Right lobe of liver (tissue), 6 donors: ENCODE measurements at regions of chr1 and their contacts with region 1.

Region 1: GRCh38 chr1:94329986-94330385 is 88.2 kb upstream of the ABCD3 start:
- DNase-seq: no peak
- ATAC-seq: peak; percentile 83 to 88 (median 86)
- H3K4me3 ChIP-seq: no peak overlapping the region
- H3K27ac ChIP-seq: no peak overlapping the region
- H3K4me1 ChIP-seq: peaks cover 0 to 4% (median 0%) of the 10 kb centered on the region in 4 donors
- H3K27me3 ChIP-seq: no peaks in the 10 kb centered on the region
- CTCF ChIP-seq: peak; percentile 49 to 59 (median 54)
- POLR2A ChIP-seq: no peak

Region 2: DNA sequence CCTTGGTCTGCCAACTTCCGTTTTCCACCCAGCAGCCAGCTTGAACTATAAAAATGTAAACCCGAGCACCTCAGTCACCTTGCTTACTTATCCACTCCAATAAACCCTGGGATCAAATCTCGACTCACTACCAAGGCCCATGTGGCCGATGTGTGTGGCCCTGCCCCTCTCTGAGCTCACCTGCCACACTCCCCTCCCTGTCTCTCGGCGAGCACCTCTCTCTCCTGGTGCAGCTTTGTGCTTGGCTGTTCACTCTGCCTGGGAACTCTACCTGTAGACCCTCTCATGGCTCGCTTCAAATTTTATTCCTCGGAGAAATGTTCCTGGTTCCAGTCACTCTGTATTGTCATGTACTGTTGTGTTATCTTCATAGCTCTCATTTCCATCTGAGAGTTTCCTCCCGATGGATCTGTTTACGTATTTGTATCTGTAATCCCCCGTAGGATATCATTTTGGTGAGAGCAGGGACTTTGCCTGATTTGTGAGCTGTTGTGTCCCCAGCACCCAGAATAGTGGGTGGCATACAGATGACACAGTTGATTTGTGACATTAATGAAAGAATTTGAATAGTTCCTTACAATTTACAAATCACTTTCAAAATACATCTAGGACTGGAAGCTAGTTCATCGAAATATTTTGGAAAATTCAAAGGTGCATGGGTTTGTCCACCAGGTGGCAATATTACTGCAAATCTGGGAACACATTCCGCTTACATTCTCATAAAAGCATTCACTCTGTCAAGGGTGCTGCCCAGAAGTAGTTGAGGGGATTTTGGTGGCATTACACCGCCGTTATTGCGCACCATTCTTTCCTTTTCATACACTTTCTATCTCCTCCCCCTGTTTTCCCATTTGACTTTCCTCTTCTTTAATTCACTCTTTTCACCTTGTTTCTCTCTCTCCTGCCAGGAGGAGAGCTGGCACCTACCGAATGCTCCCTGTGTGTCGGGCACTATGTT is 304.3 kb before region 1 on chr1:
- intact Hi-C with region 1: no loop called
- DNase-seq: no peak
- ATAC-seq: peak; percentile 74 to 79 (median 78)
- H3K4me3 ChIP-seq: peak overlapping the region; percentile 5 to 23 (median 13)
- H3K27ac ChIP-seq: no peak overlapping the region
- H3K4me1 ChIP-seq: peaks cover 0 to 5% (median 0%) of the 10 kb centered on the region in 4 donors
- H3K27me3 ChIP-seq: no peaks in the 10 kb centered on the region
- CTCF ChIP-seq: peak; percentile 79 to 85 (median 84)
- POLR2A ChIP-seq: no peak

Region 3: DNA sequence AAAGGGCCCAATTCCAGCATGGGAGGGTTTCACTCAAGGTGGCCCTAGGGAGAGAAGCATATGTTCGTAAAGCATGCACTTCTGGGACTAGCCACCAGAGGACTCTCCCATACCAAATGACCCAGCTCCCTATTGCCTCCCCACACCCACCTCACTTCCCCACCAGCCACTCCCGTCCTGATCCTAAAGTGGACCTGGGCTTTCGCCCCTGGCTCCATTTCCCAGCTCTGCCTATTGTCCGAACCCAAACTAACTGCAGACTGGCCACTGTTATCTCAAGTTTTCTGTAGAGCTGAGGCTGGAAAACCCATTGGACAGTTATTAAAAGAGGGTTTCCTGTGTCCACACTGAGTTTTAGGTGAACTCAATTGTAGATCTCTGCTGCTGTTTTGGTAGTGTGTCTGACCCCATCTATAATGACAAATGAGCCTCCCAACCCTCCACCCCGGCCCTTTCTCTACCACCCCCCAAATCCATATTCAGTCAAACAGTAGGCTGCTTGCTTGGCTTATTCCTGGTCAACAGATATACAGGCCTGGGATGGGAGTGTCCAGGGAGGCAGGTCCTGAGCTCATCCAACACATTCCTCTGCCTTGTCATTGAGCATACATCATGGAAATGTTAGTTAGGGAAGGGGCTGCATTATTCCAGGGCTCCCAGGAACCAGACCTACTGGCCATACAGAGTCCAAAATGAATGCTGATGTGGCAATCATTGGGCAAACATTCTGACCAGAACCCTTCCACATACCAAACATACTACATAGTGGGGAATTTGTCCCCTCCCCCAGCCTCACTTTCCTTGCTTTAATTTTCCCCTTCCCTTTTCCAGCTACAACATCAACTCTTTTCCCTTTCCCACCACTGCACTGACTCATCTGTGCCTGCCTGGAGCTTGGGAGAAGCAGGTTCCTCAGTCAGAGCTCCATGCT is 268.2 kb before region 1 on chr1:
- intact Hi-C with region 1: loop called in 1 of 2 experiments (anchors 5 kb)
- DNase-seq: peak; percentile 68 to 82 (median 68)
- ATAC-seq: peak; percentile 93 to 97 (median 96)
- H3K4me3 ChIP-seq: no peak overlapping the region
- H3K27ac ChIP-seq: peak overlapping the region; percentile 50 to 71 (median 51)
- H3K4me1 ChIP-seq: peaks cover 0 to 12% (median 5%) of the 10 kb centered on the region in 4 donors
- H3K27me3 ChIP-seq: no peaks in the 10 kb centered on the region
- CTCF ChIP-seq: peak; percentile 87 to 98 (median 88)
- POLR2A ChIP-seq: peak; percentile 11